Aorta (tissue), 5 donors: ENCODE measurements at regions of chr7 and their contacts with region 1.

Region 1: GRCh38 chr7:121994625-121995410 is 121.9 kb downstream of the PTPRZ1 start:
- DNase-seq: peak in 1 of 2 donors; percentile 54
- ATAC-seq: peak; percentile 84
- H3K4me3 ChIP-seq: no peak overlapping the region
- H3K27ac ChIP-seq: no peak overlapping the region
- H3K4me1 ChIP-seq: no peaks in the 10 kb centered on the region
- H3K27me3 ChIP-seq: no peaks in the 10 kb centered on the region

Region 2: GRCh38 chr7:121366852-121367431 is 627.9 kb before region 1 on chr7:
- intact Hi-C with region 1: loop called in 1 of 2 experiments (anchors 10 kb)
- DNase-seq: no peak
- ATAC-seq: no peak
- H3K4me3 ChIP-seq: no peak overlapping the region
- H3K27ac ChIP-seq: no peak overlapping the region
- H3K4me1 ChIP-seq: no peaks in the 10 kb centered on the region
- H3K27me3 ChIP-seq: no peaks in the 10 kb centered on the region

Region 3: GRCh38 chr7:121744319-121744718 is 250.5 kb before region 1 on chr7:
- intact Hi-C with region 1: loop called in 1 of 2 experiments (anchors 2 kb)
- DNase-seq: no peak
- ATAC-seq: no peak
- H3K4me3 ChIP-seq: no peak overlapping the region
- H3K27ac ChIP-seq: no peak overlapping the region
- H3K4me1 ChIP-seq: no peaks in the 10 kb centered on the region
- H3K27me3 ChIP-seq: no peaks in the 10 kb centered on the region

Region 4: GRCh38 chr7:121752706-121753105 is 242.1 kb before region 1 on chr7:
- intact Hi-C with region 1: loop called (anchors 2 to 5 kb)
- DNase-seq: no peak
- ATAC-seq: no peak
- H3K4me3 ChIP-seq: no peak overlapping the region
- H3K27ac ChIP-seq: no peak overlapping the region
- H3K4me1 ChIP-seq: no peaks in the 10 kb centered on the region
- H3K27me3 ChIP-seq: no peaks in the 10 kb centered on the region